Right cardiac atrium (tissue), 5 donors: ENCODE measurements at regions of chr13 and their contacts with region 1.

Region 1: DNA sequence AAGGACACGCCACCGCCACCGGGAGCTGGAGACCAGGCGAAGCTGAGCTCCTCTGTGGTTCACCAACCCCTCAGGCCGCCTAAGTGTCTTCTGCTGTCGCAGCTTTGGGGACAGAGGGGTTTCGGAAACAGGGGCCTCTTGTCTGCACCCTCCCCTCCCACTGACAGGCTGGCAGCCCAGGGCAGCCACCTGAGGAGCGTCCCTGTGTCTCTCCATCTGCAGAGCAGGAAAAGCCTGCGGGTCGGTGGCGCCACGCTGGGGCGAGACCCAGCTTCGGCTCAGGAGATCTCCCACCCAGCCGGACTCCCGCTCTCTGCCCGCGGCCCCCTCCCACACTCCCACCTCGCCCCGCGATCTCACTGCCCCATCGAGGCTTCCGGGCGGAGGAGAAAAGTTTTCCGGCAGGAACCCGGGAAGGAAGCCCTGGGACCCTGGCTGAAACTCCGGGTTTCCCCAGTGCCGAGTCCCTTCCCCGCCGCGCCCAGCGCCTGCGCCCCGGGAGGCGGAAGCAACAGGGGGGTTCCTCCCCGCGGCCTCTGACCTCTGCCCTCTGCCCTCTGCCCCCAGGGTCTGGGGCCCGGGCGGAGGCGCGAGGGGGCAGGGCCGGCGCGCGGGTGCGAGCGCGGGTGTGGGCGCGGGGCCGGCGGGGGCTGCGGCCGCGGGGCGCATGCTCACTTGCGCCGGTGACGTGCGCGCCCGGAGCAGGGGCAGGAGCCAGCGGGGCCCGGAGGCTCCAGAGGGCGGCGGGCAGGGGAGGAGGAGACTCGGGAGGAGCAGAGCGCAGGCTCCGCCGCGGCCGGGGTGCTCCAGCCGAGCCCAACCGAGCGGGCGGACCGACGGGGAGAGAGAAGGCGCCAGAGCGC is at the start of gene ATP11A:
- DNase-seq: peak; percentile 96 to 98 (median 98)
- ATAC-seq: peak; percentile 92 to 96
- H3K4me3 ChIP-seq: peak within 1 kb of the TSS; percentile 88
- H3K27ac ChIP-seq: peak within 1 kb of the TSS; percentile 70
- H3K4me1 ChIP-seq: peaks cover 10% of the 10 kb centered on the region
- H3K27me3 ChIP-seq: no peaks in the 10 kb centered on the region
- total RNA-seq, gene ATP11A: 53.7 to 100 (median 87.8) TPM

Region 2: DNA sequence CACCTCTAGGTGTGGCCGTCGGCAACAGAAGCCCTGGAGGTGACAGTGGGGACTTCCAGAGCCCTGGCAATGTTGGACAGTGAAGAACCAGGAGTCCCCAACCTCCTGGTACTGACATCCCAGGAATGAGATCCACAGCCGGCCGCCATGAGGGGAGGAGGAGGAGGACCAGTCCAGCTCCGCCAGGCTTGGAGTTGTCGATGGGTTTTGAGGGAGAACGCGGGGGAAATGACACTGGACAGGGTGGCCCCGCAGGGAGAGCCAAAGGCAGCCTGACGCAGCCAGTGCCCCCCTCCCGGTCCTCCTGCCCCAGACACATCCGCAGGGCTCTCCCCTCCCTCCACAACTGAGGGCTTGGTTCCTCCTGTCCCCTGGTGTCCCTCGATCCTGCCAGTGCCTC is 255.5 kb before region 1 on chr13:
- intact Hi-C with region 1: no loop called
- DNase-seq: peak in 1 of 3 donors; percentile 28
- ATAC-seq: no peak
- H3K4me3 ChIP-seq: no peak overlapping the region
- H3K27ac ChIP-seq: no peak overlapping the region
- H3K4me1 ChIP-seq: no peaks in the 10 kb centered on the region
- H3K27me3 ChIP-seq: no peaks in the 10 kb centered on the region

Region 3: DNA sequence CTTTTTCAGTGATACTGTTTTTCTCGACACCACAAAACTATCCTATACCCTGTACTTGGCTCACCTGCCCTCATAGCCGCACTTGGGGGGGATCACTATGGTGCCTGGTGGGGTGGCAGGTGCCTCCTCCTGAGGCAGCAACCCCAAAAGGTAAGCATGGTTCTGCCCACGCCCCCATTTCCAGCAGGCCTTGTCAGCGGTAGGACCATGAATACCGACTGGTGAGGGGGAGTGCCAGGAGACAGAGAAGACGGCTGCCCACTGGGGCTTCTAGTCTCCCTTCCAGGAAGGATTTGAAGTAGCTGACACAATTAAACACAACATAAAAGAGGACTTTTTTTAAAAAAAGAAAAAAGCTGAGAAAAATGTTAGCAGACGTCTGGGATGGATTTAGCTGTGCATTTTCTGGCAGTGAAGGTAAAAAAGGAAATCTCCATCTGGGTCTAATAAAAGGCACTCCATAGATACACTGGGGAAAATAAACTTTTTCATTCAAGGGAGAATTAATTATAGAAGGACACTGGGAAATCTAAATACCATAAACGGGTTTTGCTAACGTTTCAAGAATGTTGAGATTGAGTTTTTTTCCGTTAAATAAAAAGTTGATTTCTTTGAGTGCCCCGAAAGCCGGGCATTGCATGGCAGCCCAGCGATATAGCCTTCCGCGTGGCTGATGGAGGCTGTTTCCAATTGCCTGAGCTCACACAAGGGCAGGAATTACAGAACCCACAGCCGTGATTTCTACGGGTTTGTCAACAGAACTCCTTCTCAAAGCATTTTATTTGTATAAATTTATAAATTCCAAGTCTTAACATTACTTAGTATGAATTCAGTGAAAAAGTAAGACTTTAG is 45.4 kb after region 1 on chr13:
- intact Hi-C with region 1: loop called in 1 of 4 experiments (anchors 5 kb)
- DNase-seq: no peak
- ATAC-seq: no peak
- H3K4me3 ChIP-seq: no peak overlapping the region
- H3K27ac ChIP-seq: peak overlapping the region; percentile 30
- H3K4me1 ChIP-seq: peaks cover 2% of the 10 kb centered on the region
- H3K27me3 ChIP-seq: no peaks in the 10 kb centered on the region

Region 4: DNA sequence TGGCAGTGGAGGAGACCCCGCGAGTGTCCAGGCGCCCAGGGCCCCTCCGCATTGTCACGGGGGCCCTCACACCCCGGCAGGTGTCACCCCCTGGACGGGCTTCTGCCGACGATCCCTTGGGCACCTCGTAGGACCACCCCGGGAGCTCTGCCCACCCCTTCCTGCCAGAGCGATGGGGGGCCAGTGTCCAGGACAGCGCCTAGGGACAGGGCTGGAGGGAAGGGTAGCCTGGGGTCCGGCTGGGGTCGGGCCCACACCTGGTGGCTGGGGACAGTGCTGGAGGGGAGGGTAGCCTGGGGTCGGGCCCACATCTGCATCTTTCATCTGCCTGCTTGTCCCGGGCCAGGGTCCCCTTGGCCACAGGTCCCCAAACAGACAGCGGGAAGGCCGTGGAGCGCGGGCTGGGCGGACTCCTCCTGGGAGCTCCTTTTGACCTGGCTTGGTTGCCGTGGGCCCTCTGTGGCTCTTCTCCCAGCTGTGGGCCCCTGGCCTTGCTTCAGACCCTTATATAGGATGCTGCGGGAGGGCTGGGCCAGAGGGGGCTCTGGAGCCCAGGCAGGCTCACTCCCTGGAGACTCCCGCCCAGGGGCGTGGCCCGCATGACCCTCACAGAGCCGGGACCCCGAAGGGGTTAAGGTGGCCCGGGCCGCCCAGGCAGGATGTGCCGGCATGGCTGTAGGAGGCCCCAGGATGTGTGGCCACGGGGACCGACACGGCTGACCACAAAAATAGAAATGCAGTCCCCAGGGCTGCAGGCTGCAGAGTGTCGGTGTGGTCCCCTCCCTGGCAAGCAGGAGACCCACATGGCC is 205.3 kb after region 1 on chr13:
- intact Hi-C with region 1: no loop called
- DNase-seq: peak in 1 of 3 donors; percentile 71
- ATAC-seq: peak; percentile 4 to 19
- H3K4me3 ChIP-seq: peak overlapping the region; percentile 49
- H3K27ac ChIP-seq: no peak overlapping the region
- H3K4me1 ChIP-seq: no peaks in the 10 kb centered on the region
- H3K27me3 ChIP-seq: no peaks in the 10 kb centered on the region

Region 5: GRCh38 chr13:112983428-112984196 is 294.1 kb after region 1 on chr13:
- intact Hi-C with region 1: no loop called
- DNase-seq: peak; percentile 63 to 75 (median 70)
- ATAC-seq: peak; percentile 66 to 73
- H3K4me3 ChIP-seq: no peak overlapping the region
- H3K27ac ChIP-seq: peak overlapping the region; percentile 7
- H3K4me1 ChIP-seq: no peaks in the 10 kb centered on the region
- H3K27me3 ChIP-seq: no peaks in the 10 kb centered on the region